Breast epithelium (tissue), 4 donors: ENCODE measurements at regions of chr7 and their contacts with region 1.

Region 1: GRCh38 chr7:104179178-104179577 is 28.6 kb downstream of the ORC5 start:
- DNase-seq: no peak
- H3K4me3 ChIP-seq: no peak overlapping the region
- H3K27ac ChIP-seq: no peak overlapping the region
- H3K4me1 ChIP-seq: no peaks in the 10 kb centered on the region
- H3K27me3 ChIP-seq: no peaks in the 10 kb centered on the region
- CTCF ChIP-seq: no peak
- POLR2A ChIP-seq: no peak

Region 2: DNA sequence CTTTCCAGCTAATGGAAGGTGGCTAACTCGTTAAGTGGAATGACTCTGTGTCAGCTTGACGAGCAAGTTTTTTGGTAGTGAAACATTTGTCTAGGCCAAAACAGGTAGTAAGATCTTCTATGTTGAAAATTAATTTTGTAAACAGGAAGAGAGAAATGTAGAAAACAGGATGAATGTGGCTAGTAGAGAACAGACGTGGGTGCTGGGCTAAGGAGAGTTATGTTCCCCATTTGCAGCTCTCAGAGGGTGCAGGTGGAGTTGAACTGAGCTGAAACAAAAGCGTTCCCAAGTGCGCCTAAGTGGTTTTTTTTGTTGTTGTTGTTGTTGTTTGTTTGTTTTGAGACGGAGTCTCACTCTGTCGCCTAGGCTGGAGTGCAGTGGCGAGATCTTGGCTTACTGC is 1269.0 kb after region 1 on chr7:
- intact Hi-C with region 1: loop called (anchors 5 kb)
- DNase-seq: no peak
- H3K4me3 ChIP-seq: no peak overlapping the region
- H3K27ac ChIP-seq: no peak overlapping the region
- H3K4me1 ChIP-seq: no peaks in the 10 kb centered on the region
- H3K27me3 ChIP-seq: no peaks in the 10 kb centered on the region
- CTCF ChIP-seq: no peak
- POLR2A ChIP-seq: no peak